Transverse colon (tissue), 4 donors: ENCODE measurements at regions of chr1 and their contacts with region 1.

Region 1: DNA sequence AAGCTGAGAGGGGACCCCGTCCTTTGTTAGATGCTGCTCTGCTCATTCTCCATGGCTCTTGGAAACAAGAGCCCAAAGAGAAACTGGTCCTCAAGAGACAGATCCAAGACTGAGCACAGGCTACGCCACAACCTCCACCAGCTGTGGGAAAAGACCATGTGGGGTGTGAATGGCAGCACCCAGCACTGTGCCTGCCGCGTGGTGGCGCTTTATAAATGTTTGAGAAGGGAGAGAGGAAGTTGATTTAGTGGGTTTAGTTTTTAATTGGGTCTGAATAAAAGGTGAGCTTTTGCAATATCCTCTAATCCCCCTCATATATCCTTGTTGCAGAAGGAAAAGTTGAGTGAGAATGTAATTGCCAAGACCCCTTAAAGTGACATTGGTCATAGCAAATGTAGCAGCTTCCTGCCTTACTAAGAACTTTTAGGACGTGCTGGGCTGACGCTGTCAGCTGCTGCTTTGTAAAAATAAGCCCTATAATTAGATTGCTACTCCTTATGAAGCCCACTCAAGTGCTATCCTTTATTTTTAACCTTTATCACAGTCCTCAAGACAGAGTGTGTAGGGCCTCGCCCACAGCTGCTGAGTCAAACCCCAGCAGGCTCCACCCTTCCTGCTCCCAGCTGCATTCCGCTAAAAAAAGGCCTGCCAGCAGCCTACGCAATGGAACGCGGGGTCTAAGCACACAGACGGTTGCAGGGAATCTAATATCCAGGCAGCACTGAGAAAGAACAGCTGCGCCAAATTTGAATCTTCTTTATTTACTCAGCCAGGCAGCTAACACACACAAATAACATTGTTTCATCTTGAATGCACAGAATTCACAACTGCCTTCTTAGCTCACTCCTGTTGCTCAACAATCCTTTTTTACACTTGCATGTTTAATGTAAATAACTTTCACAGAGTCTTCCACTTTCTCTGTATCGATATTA is 47.4 kb upstream of the PRDX6 start:
- DNase-seq: peak; percentile 87
- H3K4me3 ChIP-seq: peak overlapping the region in 1 of 4 donors; percentile 6
- H3K27ac ChIP-seq: peak overlapping the region; percentile 83 to 90 (median 86)
- H3K4me1 ChIP-seq: peaks cover 22 to 60% (median 36%) of the 10 kb centered on the region in 4 donors
- H3K27me3 ChIP-seq: no peaks in the 10 kb centered on the region
- CTCF ChIP-seq: peak; percentile 54 to 80 (median 62)
- EP300 ChIP-seq: no peak
- POLR2A ChIP-seq: no peak

Region 2: DNA sequence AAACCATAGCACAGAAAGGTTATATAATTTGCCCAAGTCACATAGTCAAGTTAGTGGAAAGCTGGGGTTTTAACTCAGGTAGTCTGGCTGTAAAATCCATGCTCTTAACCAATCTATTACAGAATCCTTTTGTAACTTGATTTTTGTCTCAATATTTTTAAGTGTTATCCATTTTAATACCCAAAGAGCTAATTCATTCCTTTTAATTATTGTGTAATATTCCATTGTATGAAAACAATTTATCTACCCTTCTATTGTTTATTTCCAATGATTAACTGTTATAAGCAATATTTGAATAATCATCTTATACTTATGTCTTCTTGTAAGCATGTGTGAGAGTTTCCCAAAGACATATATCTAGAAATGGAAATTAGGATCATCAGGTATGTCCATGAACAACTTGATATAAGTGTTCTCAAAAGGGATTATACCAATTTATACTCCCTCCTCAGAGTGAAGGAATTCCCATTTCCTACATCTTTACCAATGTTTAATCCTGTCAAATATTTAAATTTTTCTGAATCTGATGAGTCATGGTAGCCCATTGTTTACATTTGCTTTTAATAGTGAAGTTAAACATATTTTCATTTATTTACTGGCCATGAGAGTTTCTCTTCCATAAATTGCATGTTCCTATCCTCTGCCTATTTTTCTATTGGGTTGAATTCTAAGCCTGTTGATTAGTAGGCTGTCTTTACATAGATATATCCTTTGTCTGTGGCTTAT is 219.3 kb after region 1 on chr1:
- in situ Hi-C with region 1: no loop called
- intact Hi-C with region 1: no loop called
- DNase-seq: no peak
- H3K4me3 ChIP-seq: no peak overlapping the region
- H3K27ac ChIP-seq: no peak overlapping the region
- H3K4me1 ChIP-seq: no peaks in the 10 kb centered on the region
- H3K27me3 ChIP-seq: no peaks in the 10 kb centered on the region
- CTCF ChIP-seq: no peak
- EP300 ChIP-seq: no peak
- POLR2A ChIP-seq: no peak

Region 3: DNA sequence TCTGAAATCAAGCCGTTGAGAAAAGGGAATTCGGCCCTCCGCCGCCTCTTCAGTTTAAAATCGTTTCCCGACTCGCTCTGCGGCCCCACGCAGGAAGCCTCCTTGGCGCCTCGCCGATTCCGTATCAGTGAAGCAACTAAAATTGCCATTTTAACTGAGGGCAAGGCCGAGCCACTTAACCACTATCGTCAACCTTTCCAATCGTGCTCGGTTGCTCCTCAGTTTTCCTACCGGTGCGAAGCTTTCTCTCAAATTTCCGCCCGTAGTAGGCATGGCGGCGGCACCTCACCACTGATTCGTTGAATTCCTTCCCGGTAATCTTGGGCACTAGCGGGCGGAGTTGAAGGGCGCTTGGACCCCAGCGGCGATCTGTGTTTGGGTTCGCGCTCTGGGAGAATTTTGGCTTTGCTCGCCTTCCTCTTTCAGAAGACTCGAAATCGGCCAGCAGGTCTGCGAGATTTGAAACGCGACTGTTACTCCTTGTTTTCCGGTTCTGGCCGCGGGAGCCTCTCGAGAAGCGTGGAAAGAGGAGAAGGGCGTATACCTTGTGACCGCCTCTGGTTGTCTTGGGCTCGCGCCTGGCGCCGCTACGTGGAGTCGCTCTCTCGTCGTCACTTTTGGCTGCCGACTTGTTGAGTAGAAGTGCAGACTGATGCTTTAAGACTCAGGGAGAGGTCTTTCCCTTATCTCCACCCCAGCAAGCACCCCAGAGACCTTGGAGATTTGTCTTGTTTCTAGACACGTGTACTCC is 394.8 kb after region 1 on chr1 and contains the starts of genes CENPL and DARS2:
- in situ Hi-C with region 1: loop called in 3 of 4 experiments (anchors 10 to 25 kb)
- intact Hi-C with region 1: loop called (anchors 10 kb)
- DNase-seq: peak; percentile 96
- H3K4me3 ChIP-seq: peak within 1 kb of the TSS; percentile 48 to 89 (median 64)
- H3K27ac ChIP-seq: peak within 1 kb of the TSS; percentile 91 to 94 (median 92)
- H3K4me1 ChIP-seq: peaks cover 8 to 32% (median 8%) of the 10 kb centered on the region in 4 donors
- H3K27me3 ChIP-seq: no peaks in the 10 kb centered on the region
- CTCF ChIP-seq: peak in 1 of 5 experiments; percentile 28
- EP300 ChIP-seq: no peak
- POLR2A ChIP-seq: peak; percentile 62
- total RNA-seq, gene CENPL: 4.3 to 6.7 (median 4.9) TPM in 3 of 4 donors, not detected in the other
- total RNA-seq, gene DARS2: 12.0 to 19.7 (median 16.6) TPM